MCF 10A (cell line): ENCODE measurements at regions of chr14 and their contacts with region 1.

Region 1: DNA sequence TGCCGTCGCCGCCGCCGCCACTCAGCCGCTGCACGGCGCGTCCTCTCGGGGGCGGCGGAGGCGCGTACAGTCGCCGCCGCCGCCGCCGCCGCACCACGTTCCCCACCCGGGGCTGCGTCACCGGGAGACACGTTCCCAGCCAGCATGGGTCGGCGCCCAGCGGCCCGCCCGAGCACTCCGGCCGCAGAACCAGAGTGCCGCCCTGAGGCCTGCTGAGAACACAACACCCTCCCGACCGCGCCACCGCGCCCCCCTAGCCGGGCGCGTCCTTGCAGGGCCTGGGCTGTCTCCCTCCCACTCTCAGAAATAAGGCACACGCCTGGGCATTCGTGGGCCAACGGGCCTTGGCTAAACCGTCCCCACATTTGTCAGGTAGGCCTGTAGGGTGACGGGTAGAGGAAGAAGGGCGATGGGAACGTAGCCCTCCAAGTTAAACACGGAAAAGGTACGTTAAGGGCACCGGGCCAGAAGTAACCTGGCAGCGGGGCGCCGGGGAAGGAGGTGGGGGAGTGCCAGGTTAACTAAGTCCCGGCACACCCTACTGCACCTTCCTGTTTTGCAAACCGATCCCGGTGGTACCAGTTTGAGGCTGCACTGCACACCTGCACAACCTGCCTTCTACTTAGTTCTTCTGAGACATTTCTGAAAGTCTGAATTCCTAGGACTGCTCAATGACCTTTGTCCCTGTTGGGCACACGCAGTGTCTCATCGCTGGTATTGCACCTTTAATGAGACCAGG is at the start of gene MAP4K5:
- DNase-seq: peak; percentile 89
- H3K4me3 Mint-ChIP-seq: peak within 1 kb of the TSS; percentile 80
- H3K27ac Mint-ChIP-seq: peak within 1 kb of the TSS; percentile 46
- H3K4me1 Mint-ChIP-seq: peaks cover 34% of the 10 kb centered on the region
- H3K27me3 Mint-ChIP-seq: no peaks in the 10 kb centered on the region
- CTCF ChIP-seq: peak; percentile 91
- total RNA-seq, gene MAP4K5: 43.8 and 45.7 TPM in 2 replicates

Region 2: GRCh38 chr14:50116181-50116956 is 416.3 kb before region 1 on chr14 and contains the start of gene VCPKMT:
- CTCF ChIA-PET with region 1: no interaction called
- POLR2A ChIA-PET with region 1: interaction called, 6 read pairs
- intact Hi-C with region 1: loop called (anchors 1 kb)
- DNase-seq: peak; percentile 90
- H3K4me3 Mint-ChIP-seq: peak within 1 kb of the TSS; percentile 93
- H3K27ac Mint-ChIP-seq: peak within 1 kb of the TSS; percentile 99
- H3K4me1 Mint-ChIP-seq: no peaks in the 10 kb centered on the region
- H3K27me3 Mint-ChIP-seq: no peaks in the 10 kb centered on the region
- CTCF ChIP-seq: no peak
- total RNA-seq, gene VCPKMT: 7.2 and 10.4 TPM in 2 replicates

Region 3: GRCh38 chr14:50290306-50290705 is 242.4 kb before region 1 on chr14:
- CTCF ChIA-PET with region 1: no interaction called
- POLR2A ChIA-PET with region 1: no interaction called
- intact Hi-C with region 1: no loop called
- DNase-seq: no peak
- H3K4me3 Mint-ChIP-seq: no peak overlapping the region
- H3K27ac Mint-ChIP-seq: no peak overlapping the region
- H3K4me1 Mint-ChIP-seq: no peaks in the 10 kb centered on the region
- H3K27me3 Mint-ChIP-seq: no peaks in the 10 kb centered on the region
- CTCF ChIP-seq: no peak

Region 4: GRCh38 chr14:50321009-50321660 is 211.5 kb before region 1 on chr14:
- CTCF ChIA-PET with region 1: interaction called, 19 read pairs
- POLR2A ChIA-PET with region 1: interaction called, 26 read pairs
- intact Hi-C with region 1: loop called (anchors 1 kb)
- DNase-seq: peak; percentile 89
- H3K4me3 Mint-ChIP-seq: no peak overlapping the region
- H3K27ac Mint-ChIP-seq: no peak overlapping the region
- H3K4me1 Mint-ChIP-seq: no peaks in the 10 kb centered on the region
- H3K27me3 Mint-ChIP-seq: no peaks in the 10 kb centered on the region
- CTCF ChIP-seq: peak; percentile 61

Region 5: DNA sequence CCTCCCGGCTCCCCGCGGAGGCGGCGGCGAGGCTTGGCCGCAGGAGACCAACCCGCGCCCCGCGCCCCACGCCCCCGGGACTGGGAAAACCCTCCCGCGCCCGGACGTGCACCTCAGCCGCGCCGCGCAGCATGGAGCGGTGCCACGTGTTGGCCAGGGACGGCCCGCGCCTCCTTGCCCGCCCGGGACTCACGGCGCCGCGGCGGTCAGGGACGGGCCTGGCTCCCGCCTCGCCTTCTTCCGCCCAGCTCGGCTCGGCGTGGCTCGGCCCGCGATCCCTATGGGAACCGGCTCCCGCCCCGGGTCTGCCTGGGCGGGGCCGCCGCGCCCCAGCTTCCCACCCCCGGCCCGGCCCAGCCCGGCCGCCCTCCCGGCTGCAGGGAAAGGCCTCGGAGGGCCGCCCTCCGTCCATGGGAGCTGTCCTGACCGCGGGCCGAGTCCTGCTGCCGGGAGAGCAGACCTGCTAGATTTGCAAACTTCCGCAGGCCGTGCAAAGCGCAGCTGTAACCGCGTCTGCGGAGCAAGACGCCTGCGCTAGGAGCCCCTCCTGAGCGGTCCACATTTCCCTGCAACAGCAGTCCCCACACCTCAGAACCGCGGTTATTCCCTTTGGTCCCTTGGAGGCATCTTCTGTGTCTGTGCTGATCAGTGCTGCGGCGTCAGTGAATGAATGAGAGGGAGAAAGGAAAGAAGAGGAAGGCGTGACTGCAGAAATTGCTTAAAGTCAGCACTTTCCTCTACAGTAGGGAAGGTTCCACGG is 135.9 kb before region 1 on chr14 and contains the start of gene CDKL1:
- CTCF ChIA-PET with region 1: interaction called, 4 read pairs
- POLR2A ChIA-PET with region 1: interaction called, 14 read pairs
- intact Hi-C with region 1: loop called (anchors 2 kb)
- DNase-seq: peak; percentile 76
- H3K4me3 Mint-ChIP-seq: peak within 1 kb of the TSS; percentile 86
- H3K27ac Mint-ChIP-seq: peak within 1 kb of the TSS; percentile 90
- H3K4me1 Mint-ChIP-seq: peaks cover 18% of the 10 kb centered on the region
- H3K27me3 Mint-ChIP-seq: no peaks in the 10 kb centered on the region
- CTCF ChIP-seq: no peak
- total RNA-seq, gene CDKL1: 14.3 and 26.3 TPM in 2 replicates

Region 6: DNA sequence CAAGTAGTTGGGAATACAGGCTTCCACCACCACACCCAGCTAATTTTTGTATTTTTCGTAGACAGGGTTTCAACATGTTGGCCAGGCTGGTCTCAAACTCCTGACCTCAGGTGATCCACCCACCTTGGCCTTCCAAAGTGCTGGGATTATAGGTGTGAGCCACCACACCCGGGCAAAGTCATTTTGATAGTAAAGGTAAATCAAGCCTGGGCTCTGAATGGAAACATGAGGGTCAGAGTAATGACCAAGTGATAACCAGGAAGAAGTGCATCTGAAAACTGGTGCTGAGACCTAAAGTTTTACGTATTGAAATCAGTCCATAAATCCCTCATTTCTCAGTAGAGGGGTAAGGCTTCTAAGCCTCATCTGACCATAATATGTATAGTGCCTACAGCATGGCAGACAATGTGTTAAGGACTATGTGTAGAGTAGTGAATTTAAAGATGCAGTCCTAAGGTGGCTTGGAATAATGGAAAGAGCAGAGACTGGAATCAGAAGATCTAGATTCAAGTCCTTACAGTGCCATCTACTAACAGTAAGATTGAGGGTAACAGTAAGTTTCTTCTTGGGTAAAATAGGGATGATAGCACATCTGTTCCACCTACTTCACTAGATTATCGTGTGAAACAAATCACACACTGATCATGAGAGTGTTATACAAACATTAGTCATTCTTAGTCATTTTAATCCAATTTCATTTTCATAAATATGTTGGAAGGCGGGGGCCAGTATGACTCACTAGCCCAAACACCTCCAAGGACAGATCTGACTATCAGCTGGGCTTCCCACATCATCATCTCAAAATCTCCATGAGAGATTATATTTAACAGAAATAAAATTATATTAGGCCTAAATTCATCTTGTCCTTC is 11.5 kb before region 1 on chr14:
- CTCF ChIA-PET with region 1: interaction called, 4 read pairs
- POLR2A ChIA-PET with region 1: interaction called, 11 read pairs
- intact Hi-C with region 1: no loop called
- DNase-seq: peak; percentile 86
- H3K4me3 Mint-ChIP-seq: peak overlapping the region; percentile 35
- H3K27ac Mint-ChIP-seq: peak overlapping the region; percentile 76
- H3K4me1 Mint-ChIP-seq: peaks cover 36% of the 10 kb centered on the region
- H3K27me3 Mint-ChIP-seq: no peaks in the 10 kb centered on the region
- CTCF ChIP-seq: no peak